Activated CD8-positive, alpha-beta memory T cell treated with anti-CD3 and anti-CD28 coated beads, Interleukin-2, amount 10 ng/mL, durations not matched to agents 7 days and 5 days (primary cell): ENCODE measurements at regions of chr14 and their contacts with region 1.

Region 1: DNA sequence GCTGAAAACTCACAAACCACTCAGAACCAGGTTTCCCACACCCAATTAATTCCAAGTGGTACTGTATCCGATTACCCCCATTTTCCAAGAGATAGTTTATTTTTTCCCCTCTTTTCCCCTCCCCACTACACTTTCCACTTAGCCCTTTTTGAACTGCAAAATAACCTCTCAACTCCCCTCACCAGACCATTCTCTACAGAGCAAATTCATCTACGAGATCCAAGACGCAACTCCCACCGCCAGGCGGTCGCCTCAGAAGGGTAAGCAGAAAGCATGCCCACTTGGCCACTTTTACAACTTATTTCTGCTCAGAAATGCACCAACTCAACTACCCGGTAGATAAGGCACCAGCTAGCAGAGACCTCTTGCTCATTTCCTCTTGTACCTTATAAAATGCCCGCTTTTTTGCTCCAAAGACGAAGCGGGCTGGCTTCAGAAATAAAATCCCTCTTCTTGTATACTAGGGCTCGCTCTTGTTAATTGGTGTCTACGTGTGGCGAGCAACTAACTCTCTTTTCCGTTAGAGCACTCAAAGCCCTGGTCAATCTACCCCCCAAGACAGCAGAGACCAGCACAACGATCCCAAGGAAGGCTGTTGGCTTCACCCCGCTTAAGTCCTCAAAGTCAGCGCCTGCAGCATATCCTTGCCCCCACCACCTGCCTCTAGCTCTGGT is 912 bp upstream of the SRP54 start:
- DNase-seq: peak; percentile 64
- ATAC-seq: peak; percentile 4
- H3K4me3 Mint-ChIP-seq: no peak overlapping the region
- H3K27ac Mint-ChIP-seq: no peak overlapping the region
- H3K4me1 Mint-ChIP-seq: peaks cover 13% of the 10 kb centered on the region
- H3K27me3 Mint-ChIP-seq: no peaks in the 10 kb centered on the region

Region 2: DNA sequence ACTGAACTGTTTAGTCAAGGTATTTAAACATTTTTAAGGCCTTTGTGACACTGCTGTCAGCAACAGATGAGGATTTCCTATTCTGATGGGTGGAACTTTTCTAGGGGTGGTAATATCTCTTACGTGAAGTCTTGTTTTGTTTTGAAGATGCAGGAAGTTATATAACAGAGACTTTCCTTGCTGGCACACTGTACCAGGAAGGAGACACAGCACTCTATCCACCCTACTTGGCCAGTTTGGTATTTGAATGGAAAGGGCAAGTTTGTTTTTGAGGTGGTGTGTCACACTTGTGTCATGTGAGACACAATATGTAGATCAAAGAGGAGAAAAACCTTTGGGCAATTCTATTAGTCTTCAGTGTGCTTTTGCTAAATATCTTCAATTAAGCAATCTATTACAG is 50.7 kb before region 1 on chr14:
- CTCF ChIA-PET with region 1: no interaction called
- DNase-seq: no peak
- ATAC-seq: peak; percentile 72
- H3K4me3 Mint-ChIP-seq: peak overlapping the region; percentile 41
- H3K27ac Mint-ChIP-seq: peak overlapping the region; percentile 95
- H3K4me1 Mint-ChIP-seq: peaks cover 21% of the 10 kb centered on the region
- H3K27me3 Mint-ChIP-seq: no peaks in the 10 kb centered on the region

Region 3: GRCh38 chr14:35046048-35046741 is 64.3 kb after region 1 on chr14 and contains the start of gene FAM177A1:
- CTCF ChIA-PET with region 1: interaction called, 13 read pairs
- DNase-seq: peak; percentile 99
- ATAC-seq: peak; percentile 95
- H3K4me3 Mint-ChIP-seq: peak within 1 kb of the TSS; percentile 89
- H3K27ac Mint-ChIP-seq: peak within 1 kb of the TSS; percentile 99
- H3K4me1 Mint-ChIP-seq: peaks cover 35% of the 10 kb centered on the region
- H3K27me3 Mint-ChIP-seq: no peaks in the 10 kb centered on the region
- total RNA-seq, gene FAM177A1: 40.1 to 40.7 TPM